ENCODE measurements at regions of chr2 and their contacts with region 1.

Region 1: GRCh38 chr2:31414601-31415241 is at the start of gene XDH:
- DNase-seq: peak in 1 of 2 donors; percentile 45
- H3K4me3 ChIP-seq: no peak within 1 kb of the TSS
- H3K27ac ChIP-seq: peak within 1 kb of the TSS; percentile 27 to 44
- H3K4me1 ChIP-seq: no peaks in the 10 kb centered on the region
- H3K27me3 ChIP-seq: no peaks in the 10 kb centered on the region
- CTCF ChIP-seq: no peak
- POLR2A ChIP-seq: no peak
- total RNA-seq, gene XDH: 0.16 to 6.9 (median 1.3) TPM

Region 2: DNA sequence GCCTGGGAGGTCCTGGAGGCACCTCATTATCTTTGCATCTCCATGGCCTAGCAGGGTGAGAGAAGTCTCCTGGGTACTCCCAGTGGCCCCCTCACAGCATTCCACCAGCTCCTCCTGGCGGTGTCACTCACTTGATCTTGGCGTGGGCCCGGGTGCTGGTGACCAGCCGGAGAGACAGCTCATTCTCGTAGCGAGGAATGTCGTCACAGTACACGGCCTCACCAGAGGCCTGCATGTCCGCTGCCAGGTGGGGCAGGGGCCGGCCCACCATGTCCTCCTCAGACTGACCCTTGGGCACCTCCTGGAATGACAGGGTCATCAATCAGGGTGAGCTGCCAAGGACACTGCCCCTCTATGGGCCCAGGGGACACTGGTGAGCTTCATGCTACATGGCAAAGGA is 42.6 kb before region 1 on chr2:
- intact Hi-C with region 1: no loop called
- DNase-seq: no peak
- H3K4me3 ChIP-seq: no peak overlapping the region
- H3K27ac ChIP-seq: no peak overlapping the region
- H3K4me1 ChIP-seq: no peaks in the 10 kb centered on the region
- H3K27me3 ChIP-seq: no peaks in the 10 kb centered on the region
- CTCF ChIP-seq: no peak
- POLR2A ChIP-seq: no peak

Region 3: GRCh38 chr2:31428001-31428418 is 13.3 kb after region 1 on chr2:
- intact Hi-C with region 1: no loop called
- DNase-seq: no peak
- H3K4me3 ChIP-seq: no peak overlapping the region
- H3K27ac ChIP-seq: no peak overlapping the region
- H3K4me1 ChIP-seq: no peaks in the 10 kb centered on the region
- H3K27me3 ChIP-seq: no peaks in the 10 kb centered on the region
- CTCF ChIP-seq: no peak
- POLR2A ChIP-seq: no peak

Region 4: GRCh38 chr2:31504311-31504710 is 89.6 kb after region 1 on chr2:
- intact Hi-C with region 1: loop called (anchors 5 kb)
- DNase-seq: no peak
- H3K4me3 ChIP-seq: no peak overlapping the region
- H3K27ac ChIP-seq: no peak overlapping the region
- H3K4me1 ChIP-seq: no peaks in the 10 kb centered on the region
- H3K27me3 ChIP-seq: no peaks in the 10 kb centered on the region
- CTCF ChIP-seq: no peak
- POLR2A ChIP-seq: no peak